ENCODE measurements at regions of chr16 and their contacts with region 1.

Region 1: GRCh38 chr16:15822957-15823356 is 33.9 kb downstream of the MYH11 start:
- DNase-seq: no peak
- ATAC-seq: no peak
- H3K4me3 ChIP-seq: no peak overlapping the region
- H3K4me3 Mint-ChIP-seq: no peak overlapping the region
- H3K27ac ChIP-seq: no peak overlapping the region
- H3K27ac Mint-ChIP-seq: no peak overlapping the region
- H3K4me1 ChIP-seq: no peaks in the 10 kb centered on the region
- H3K4me1 Mint-ChIP-seq: no peaks in the 10 kb centered on the region
- H3K27me3 ChIP-seq: no peaks in the 10 kb centered on the region
- H3K27me3 Mint-ChIP-seq: peaks cover 3% of the 10 kb centered on the region
- CTCF ChIP-seq: no peak

Region 2: GRCh38 chr16:15653227-15653626 is 169.7 kb before region 1 on chr16:
- CTCF ChIA-PET with region 1: no interaction called
- POLR2A ChIA-PET with region 1: no interaction called
- intact Hi-C with region 1: no loop called
- DNase-seq: no peak
- ATAC-seq: no peak
- H3K4me3 ChIP-seq: no peak overlapping the region
- H3K4me3 Mint-ChIP-seq: peak overlapping the region; percentile 46
- H3K27ac ChIP-seq: peak overlapping the region in 1 of 2 donors; percentile 29
- H3K27ac Mint-ChIP-seq: peak overlapping the region; percentile 61
- H3K4me1 ChIP-seq: peaks cover 21 to 40% of the 10 kb centered on the region in 2 donors
- H3K4me1 Mint-ChIP-seq: peaks cover 52% of the 10 kb centered on the region
- H3K27me3 ChIP-seq: no peaks in the 10 kb centered on the region
- H3K27me3 Mint-ChIP-seq: no peaks in the 10 kb centered on the region
- CTCF ChIP-seq: no peak

Region 3: GRCh38 chr16:15790458-15790857 is 32.5 kb before region 1 on chr16:
- CTCF ChIA-PET with region 1: no interaction called
- POLR2A ChIA-PET with region 1: no interaction called
- intact Hi-C with region 1: no loop called
- DNase-seq: no peak
- ATAC-seq: no peak
- H3K4me3 ChIP-seq: no peak overlapping the region
- H3K4me3 Mint-ChIP-seq: no peak overlapping the region
- H3K27ac ChIP-seq: no peak overlapping the region
- H3K27ac Mint-ChIP-seq: no peak overlapping the region
- H3K4me1 ChIP-seq: no peaks in the 10 kb centered on the region
- H3K4me1 Mint-ChIP-seq: peaks cover 4% of the 10 kb centered on the region
- H3K27me3 ChIP-seq: no peaks in the 10 kb centered on the region
- H3K27me3 Mint-ChIP-seq: no peaks in the 10 kb centered on the region
- CTCF ChIP-seq: no peak

Region 4: GRCh38 chr16:15811481-15812400 is 11.2 kb before region 1 on chr16:
- CTCF ChIA-PET with region 1: interaction called, 15 read pairs
- POLR2A ChIA-PET with region 1: no interaction called
- intact Hi-C with region 1: no loop called
- DNase-seq: no peak
- ATAC-seq: no peak
- H3K4me3 ChIP-seq: no peak overlapping the region
- H3K4me3 Mint-ChIP-seq: no peak overlapping the region
- H3K27ac ChIP-seq: no peak overlapping the region
- H3K27ac Mint-ChIP-seq: no peak overlapping the region
- H3K4me1 ChIP-seq: no peaks in the 10 kb centered on the region
- H3K4me1 Mint-ChIP-seq: no peaks in the 10 kb centered on the region
- H3K27me3 ChIP-seq: peaks cover 0 to 15% (median 0%) of the 10 kb centered on the region in 4 experiments
- H3K27me3 Mint-ChIP-seq: peaks cover 15% of the 10 kb centered on the region
- CTCF ChIP-seq: no peak

Region 5: DNA sequence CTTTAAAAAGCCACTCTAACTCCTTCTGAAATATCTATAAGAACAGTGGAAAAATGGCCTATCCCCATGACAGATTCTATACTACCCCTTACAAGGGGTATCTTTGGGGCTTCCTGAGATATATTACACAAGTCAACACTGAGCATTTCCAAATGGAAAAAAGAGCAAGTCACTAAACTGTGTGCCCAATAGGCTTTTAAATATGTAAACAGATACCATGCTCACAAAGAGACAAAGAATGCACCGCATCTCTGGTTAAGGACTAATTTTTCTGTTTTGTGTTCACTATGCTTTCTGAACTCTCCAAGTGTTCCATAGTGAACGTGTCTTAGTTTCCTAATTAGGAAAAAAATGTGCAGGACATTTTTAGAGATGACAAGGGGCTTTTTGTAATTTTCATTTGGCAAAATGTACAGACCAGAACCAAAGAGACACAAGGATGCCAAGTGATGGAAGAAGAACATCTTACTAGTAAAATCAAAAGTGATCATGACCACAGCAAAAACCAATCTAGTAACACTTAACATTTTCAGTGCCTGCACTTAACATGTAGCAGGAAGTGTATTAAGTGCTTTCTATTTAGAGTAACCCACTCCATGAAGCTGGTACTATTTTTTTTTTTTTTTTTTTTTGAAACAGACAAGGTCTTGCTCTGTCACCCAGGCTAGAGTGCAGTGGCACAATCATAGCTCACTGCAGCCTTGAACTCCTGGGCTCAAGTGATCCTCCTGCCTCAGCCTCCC is 12.3 kb after region 1 on chr16:
- CTCF ChIA-PET with region 1: no interaction called
- POLR2A ChIA-PET with region 1: no interaction called
- intact Hi-C with region 1: no loop called
- DNase-seq: no peak
- ATAC-seq: no peak
- H3K4me3 ChIP-seq: no peak overlapping the region
- H3K4me3 Mint-ChIP-seq: no peak overlapping the region
- H3K27ac ChIP-seq: no peak overlapping the region
- H3K27ac Mint-ChIP-seq: no peak overlapping the region
- H3K4me1 ChIP-seq: peaks cover 8 to 16% of the 10 kb centered on the region in 2 donors
- H3K4me1 Mint-ChIP-seq: peaks cover 10% of the 10 kb centered on the region
- H3K27me3 ChIP-seq: no peaks in the 10 kb centered on the region
- H3K27me3 Mint-ChIP-seq: no peaks in the 10 kb centered on the region
- CTCF ChIP-seq: no peak

Region 6: DNA sequence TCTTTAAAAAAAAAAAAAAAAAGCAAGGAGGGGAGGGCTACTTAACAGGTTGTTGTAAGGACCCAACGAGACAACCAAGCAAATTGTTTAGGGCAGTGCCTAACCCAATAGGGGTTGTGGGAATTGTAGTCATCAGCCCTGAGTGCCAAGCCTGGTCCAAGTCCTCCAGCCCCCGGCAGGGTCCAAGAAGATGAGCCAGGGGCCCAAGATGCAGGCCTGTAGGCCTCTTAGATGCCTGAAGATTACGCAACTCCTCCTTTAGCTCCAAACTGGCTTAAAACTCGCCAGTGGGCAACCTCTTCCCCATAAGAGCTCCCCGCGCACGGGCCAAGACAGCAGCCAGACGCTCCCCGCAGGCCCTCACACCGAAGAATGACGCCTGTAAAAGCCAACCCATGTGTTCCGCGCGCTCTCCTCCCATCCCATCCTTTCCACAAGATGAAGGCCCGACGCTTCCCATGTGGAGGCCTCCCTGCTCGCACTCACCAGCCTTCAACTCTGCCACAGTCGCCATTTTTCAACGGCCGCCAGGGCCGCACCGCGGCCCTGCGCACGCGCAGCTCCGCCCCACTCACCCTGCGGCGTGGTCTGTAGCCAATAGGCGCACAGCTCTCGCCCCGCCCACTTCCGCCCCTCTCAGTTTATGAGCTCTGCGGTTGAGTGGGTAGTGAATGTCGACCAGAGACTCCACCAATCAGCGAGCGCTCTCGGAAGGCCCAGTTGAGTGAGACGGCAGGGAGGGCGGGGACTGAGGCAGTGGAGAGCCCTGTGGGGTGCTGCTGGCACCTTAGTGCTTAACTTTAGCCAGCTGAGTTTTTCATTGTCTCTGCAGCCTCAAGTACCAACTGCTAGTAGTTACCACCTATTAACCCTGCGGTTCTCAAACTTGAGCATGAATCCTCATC is 65.4 kb after region 1 on chr16 and contains the start of gene CEP20:
- CTCF ChIA-PET with region 1: no interaction called
- POLR2A ChIA-PET with region 1: no interaction called
- intact Hi-C with region 1: no loop called
- DNase-seq: peak; percentile 100
- ATAC-seq: peak; percentile 98
- H3K4me3 ChIP-seq: peak within 1 kb of the TSS; percentile 66 to 99 (median 96)
- H3K4me3 Mint-ChIP-seq: peak within 1 kb of the TSS; percentile 95
- H3K27ac ChIP-seq: peak within 1 kb of the TSS; percentile 64 to 76
- H3K27ac Mint-ChIP-seq: peak within 1 kb of the TSS; percentile 95
- H3K4me1 ChIP-seq: peaks cover 14 to 16% of the 10 kb centered on the region in 2 donors
- H3K4me1 Mint-ChIP-seq: peaks cover 31% of the 10 kb centered on the region
- H3K27me3 ChIP-seq: no peaks in the 10 kb centered on the region
- H3K27me3 Mint-ChIP-seq: no peaks in the 10 kb centered on the region
- CTCF ChIP-seq: no peak
- total RNA-seq, gene CEP20: 29.3 and 30.2 TPM in 2 replicates